PC-3 (cell line): ENCODE measurements at regions of chr5 and their contacts with region 1.

Region 1: DNA sequence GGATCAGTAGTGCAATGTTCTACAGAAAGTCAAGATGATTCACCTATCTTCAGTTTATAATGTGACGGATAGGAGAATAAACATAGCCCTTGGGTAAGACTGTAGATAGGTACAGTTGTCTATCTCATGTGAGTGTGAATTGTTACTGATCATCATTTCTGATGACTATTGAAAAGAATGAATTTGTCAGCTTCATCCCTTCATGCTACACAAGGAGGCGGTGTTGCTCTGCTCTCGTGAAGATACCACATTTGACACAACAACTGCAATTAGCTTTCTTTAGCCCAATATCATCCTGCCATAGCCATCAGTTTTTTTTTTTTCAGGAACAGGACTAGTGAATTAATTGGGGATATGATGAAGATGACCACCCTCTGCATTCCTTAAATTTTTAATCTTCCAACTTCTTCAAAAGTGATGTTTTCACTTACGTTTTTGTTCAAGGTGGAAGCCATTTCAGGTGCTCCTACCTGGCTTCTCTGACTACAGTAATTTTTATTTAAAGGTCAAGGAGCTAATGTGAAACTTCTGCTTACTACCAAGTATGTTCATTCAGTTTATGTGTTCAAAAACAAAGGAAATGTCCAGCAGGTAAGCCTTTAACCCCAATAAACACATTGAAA is 152.9 kb upstream of the MOCS2 start:
- DNase-seq: peak; percentile 69
- ATAC-seq: peak; percentile 78
- H3K4me3 ChIP-seq: no peak overlapping the region
- H3K27ac ChIP-seq: peak overlapping the region; percentile 83
- H3K4me1 ChIP-seq: peaks cover 22% of the 10 kb centered on the region
- H3K27me3 ChIP-seq: no peaks in the 10 kb centered on the region
- CTCF ChIP-seq: peak; percentile 73

Region 2: GRCh38 chr5:53170748-53171349 is 91.6 kb before region 1 on chr5:
- CTCF ChIA-PET with region 1: no interaction called
- POLR2A ChIA-PET with region 1: no interaction called
- intact Hi-C with region 1: no loop called
- DNase-seq: peak; percentile 69
- ATAC-seq: peak; percentile 92
- H3K4me3 ChIP-seq: no peak overlapping the region
- H3K27ac ChIP-seq: 0 out of 2 replicates have a peak overlapping the region, but pooled peaks have one; percentile 9
- H3K4me1 ChIP-seq: peaks cover 9% of the 10 kb centered on the region
- H3K27me3 ChIP-seq: no peaks in the 10 kb centered on the region
- CTCF ChIP-seq: peak; percentile 83

Region 3: DNA sequence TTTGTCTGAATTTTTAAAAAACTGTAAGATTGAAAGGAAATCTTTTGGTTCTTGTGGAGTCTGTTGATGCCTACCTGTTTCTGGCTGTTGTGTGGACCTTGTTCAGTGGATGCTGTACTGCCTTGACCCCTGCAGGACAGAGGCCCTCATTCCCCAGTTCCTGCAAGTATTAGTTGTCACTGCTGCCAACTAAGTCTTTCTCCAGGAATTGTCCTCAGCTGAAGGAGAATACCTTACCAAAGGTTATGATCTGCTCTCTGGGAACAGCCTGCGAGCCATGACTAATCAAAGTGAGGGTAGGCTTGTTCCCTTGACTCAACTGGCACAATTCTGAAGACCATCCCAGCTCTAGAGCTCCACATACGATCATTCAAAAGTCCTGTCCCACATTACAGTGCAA is 72.7 kb after region 1 on chr5:
- CTCF ChIA-PET with region 1: interaction called, 4 read pairs
- POLR2A ChIA-PET with region 1: no interaction called
- intact Hi-C with region 1: loop called (anchors 1 kb)
- DNase-seq: peak; percentile 48
- ATAC-seq: peak; percentile 7; the same call in 1 of the 2 replicates
- H3K4me3 ChIP-seq: no peak overlapping the region
- H3K27ac ChIP-seq: peak overlapping the region; percentile 100
- H3K4me1 ChIP-seq: peaks cover 63% of the 10 kb centered on the region
- H3K27me3 ChIP-seq: no peaks in the 10 kb centered on the region
- CTCF ChIP-seq: peak; percentile 47; the same call in 1 of the 2 replicates

Region 4: DNA sequence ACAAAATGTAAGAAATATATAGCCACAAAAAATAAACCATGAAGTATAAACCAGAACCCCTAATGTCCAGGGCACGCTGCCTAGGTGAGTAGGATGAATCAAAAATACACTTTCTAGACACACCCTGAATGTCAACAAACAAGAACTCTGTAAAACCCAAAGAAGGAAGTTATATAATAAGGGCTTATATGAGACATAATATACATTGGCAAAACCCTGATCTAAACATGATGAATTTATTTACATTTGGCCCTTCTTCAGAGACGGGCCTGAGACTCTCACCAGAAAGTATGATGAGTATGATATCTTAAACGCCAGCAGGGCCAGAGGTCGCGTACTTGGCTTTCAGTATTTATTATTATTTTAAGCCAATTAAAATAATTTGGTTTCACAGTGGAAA is 92.9 kb after region 1 on chr5:
- CTCF ChIA-PET with region 1: interaction called, 5 read pairs
- POLR2A ChIA-PET with region 1: no interaction called
- intact Hi-C with region 1: loop called (anchors 2 kb)
- DNase-seq: peak; percentile 81
- ATAC-seq: peak; percentile 78
- H3K4me3 ChIP-seq: no peak overlapping the region
- H3K27ac ChIP-seq: peak overlapping the region; percentile 100
- H3K4me1 ChIP-seq: peaks cover 68% of the 10 kb centered on the region
- H3K27me3 ChIP-seq: no peaks in the 10 kb centered on the region
- CTCF ChIP-seq: no peak

Region 5: DNA sequence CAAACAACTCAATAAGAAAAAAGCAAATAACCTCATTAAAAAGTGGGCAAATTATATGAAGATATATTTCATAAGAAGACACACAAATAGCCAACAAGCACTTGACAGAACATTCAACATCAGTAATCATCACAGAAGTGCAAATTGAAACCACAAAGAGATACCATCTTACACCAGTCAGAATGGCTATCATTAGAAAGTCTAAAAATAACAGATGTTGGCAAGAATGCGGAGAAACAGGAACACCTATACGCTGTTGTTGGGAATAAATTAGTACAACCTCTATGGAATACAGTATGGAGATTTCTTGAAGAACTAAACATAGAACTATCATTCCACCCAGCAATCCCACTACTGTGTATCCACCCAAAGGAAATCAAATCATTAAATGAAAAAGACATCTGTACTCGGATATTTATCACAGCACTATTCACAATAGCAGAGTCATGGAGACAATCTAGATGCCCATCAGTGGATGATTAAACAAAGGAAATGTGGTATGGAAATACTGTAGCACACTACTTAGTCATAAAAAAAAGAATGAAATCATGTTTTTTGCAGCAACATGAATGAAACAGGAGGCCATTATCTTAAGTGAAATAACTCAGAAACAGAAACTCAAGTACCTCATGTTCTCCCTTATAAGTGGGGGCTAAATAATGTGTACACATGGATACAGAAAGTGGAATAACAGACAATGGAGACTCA is 111.1 kb after region 1 on chr5:
- CTCF ChIA-PET with region 1: no interaction called
- POLR2A ChIA-PET with region 1: no interaction called
- intact Hi-C with region 1: no loop called
- DNase-seq: no peak
- ATAC-seq: no peak
- H3K4me3 ChIP-seq: no peak overlapping the region
- H3K27ac ChIP-seq: peak overlapping the region; percentile 19
- H3K4me1 ChIP-seq: peaks cover 18% of the 10 kb centered on the region
- H3K27me3 ChIP-seq: no peaks in the 10 kb centered on the region
- CTCF ChIP-seq: no peak

Region 6: GRCh38 chr5:53418844-53419646 is 156.6 kb after region 1 on chr5:
- CTCF ChIA-PET with region 1: interaction called, 13 read pairs
- POLR2A ChIA-PET with region 1: no interaction called
- intact Hi-C with region 1: no loop called
- DNase-seq: peak; percentile 91
- ATAC-seq: peak; percentile 72
- H3K4me3 ChIP-seq: no peak overlapping the region
- H3K27ac ChIP-seq: peak overlapping the region; percentile 100
- H3K4me1 ChIP-seq: peaks cover 60% of the 10 kb centered on the region
- H3K27me3 ChIP-seq: no peaks in the 10 kb centered on the region
- CTCF ChIP-seq: no peak

Region 7: DNA sequence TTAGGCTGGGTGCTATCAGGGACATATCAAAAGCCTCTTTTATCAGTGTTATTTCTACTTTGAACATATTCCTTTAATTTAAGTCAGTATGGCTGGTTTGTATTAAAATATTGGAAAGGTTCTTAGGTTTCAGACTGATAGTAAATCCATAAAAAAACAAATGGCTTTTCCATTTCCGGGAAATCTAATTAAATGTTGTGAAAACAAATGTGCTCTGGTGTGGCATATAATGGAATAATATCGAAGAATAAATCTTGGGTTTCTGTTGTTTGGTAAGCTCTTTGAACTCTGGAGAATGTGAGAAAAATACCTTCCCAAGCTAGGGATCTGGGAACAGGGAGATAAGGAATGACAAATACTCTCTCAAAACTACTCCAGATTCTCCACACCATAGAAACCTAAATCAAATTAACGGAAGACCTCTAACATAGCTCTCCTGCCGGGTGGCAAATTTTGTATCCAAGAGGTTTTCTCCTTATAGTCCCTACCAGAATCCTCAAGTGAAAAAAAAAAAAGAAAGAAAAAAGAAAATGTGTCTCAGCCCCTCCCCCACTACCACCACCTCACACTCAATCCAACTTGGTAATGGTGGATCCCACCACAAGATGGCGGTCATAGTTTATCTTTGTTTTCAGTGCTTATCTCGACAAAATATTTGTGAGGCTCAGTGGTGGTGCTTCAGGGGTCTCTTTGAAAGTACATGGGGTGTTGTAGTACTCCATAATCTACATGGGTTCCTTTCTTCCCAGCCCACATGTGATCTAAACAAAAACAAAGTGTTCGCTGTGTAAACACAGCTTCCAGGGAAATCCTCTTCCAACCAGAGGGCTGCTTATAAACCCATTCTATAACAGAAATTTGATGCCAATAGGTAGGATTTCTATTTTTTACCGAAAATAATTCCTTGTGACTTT is 163.4 kb after region 1 on chr5:
- CTCF ChIA-PET with region 1: interaction called, 7 read pairs
- POLR2A ChIA-PET with region 1: interaction called, 5 read pairs
- intact Hi-C with region 1: loop called (anchors 1 kb)
- DNase-seq: peak; percentile 46
- ATAC-seq: no peak
- H3K4me3 ChIP-seq: no peak overlapping the region
- H3K27ac ChIP-seq: peak overlapping the region; percentile 100
- H3K4me1 ChIP-seq: peaks cover 73% of the 10 kb centered on the region
- H3K27me3 ChIP-seq: no peaks in the 10 kb centered on the region
- CTCF ChIP-seq: peak; percentile 53

Region 8: DNA sequence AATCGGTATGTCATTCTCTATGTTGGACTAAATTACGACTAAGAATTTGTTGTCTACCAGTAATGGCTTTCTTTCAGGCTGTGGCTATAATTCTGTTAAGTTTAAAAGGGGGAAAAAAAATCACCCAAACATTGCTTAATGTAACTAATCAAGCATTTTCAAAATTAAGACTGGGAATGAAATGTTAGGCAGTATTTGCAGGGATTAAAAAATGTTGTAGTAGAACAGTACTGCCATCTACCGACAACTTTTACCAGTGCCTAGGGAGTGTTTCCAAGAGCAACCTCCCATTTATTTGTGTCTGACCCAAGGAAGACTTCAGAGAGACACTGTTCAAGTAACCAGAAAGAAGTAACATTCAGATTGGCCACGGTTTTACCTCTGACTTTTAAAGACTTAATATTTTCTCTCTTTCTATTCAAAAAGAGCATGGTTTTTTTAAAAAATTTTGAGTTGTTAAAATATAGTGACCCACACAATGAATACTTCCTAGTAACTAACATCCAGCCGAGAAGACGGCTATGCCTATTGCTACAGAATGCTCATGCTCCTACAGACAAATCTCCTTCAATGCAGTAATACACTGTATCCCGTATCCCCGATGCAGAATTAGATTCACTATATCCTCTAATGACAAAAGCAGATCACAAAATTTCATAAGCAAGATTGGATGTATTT is 955.5 kb after region 1 on chr5:
- CTCF ChIA-PET with region 1: no interaction called
- POLR2A ChIA-PET with region 1: no interaction called
- intact Hi-C with region 1: loop called (anchors 5 kb)
- DNase-seq: peak; percentile 70
- ATAC-seq: peak; percentile 74
- H3K4me3 ChIP-seq: no peak overlapping the region
- H3K27ac ChIP-seq: no peak overlapping the region
- H3K4me1 ChIP-seq: no peaks in the 10 kb centered on the region
- H3K27me3 ChIP-seq: no peaks in the 10 kb centered on the region
- CTCF ChIP-seq: peak; percentile 68